ENCODE measurements at regions of chr3 and their contacts with region 1.

Region 1: DNA sequence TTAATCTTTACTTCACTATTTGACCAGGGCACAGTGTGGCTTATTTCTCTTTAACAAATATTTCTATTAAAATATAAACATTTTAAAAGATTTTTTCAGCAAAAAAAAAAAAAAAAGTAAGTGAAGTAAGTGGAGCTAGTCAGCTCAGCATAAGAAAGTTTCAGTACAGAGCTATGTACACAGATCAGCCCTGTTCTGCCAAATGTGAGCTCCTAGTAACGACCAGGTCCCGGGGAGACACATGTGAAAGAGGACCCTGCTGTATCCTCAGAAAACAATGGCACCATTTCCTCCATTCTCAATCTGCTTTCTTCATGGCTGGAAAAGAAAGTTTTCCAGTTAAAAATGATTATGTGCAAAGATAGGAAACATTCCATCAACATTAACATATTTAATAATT is 13.4 kb downstream of the CSTA start:
- DNase-seq: no peak
- ATAC-seq: no peak
- H3K4me3 ChIP-seq: no peak overlapping the region
- H3K27ac ChIP-seq: no peak overlapping the region
- H3K4me1 ChIP-seq: no peaks in the 10 kb centered on the region
- H3K27me3 ChIP-seq: no peaks in the 10 kb centered on the region
- CTCF ChIP-seq: no peak
- EP300 ChIP-seq: no peak
- POLR2A ChIP-seq: no peak
- RAD21 ChIP-seq: no peak

Region 2: GRCh38 chr3:122350814-122351418 is 12.5 kb after region 1 on chr3:
- CTCF ChIA-PET with region 1: interaction called, 10 read pairs
- POLR2A ChIA-PET with region 1: no interaction called
- RAD21 ChIA-PET with region 1: no interaction called
- SMC1A ChIA-PET with region 1: interaction called, 11 read pairs
- in situ Hi-C with region 1: no loop called
- intact Hi-C with region 1: no loop called
- DNase-seq: no peak
- ATAC-seq: no peak
- H3K4me3 ChIP-seq: no peak overlapping the region
- H3K27ac ChIP-seq: no peak overlapping the region
- H3K4me1 ChIP-seq: no peaks in the 10 kb centered on the region
- H3K27me3 ChIP-seq: no peaks in the 10 kb centered on the region
- CTCF ChIP-seq: no peak
- EP300 ChIP-seq: no peak
- POLR2A ChIP-seq: no peak
- RAD21 ChIP-seq: no peak

Region 3: GRCh38 chr3:122697952-122698620 is 359.7 kb after region 1 on chr3:
- CTCF ChIA-PET with region 1: no interaction called
- POLR2A ChIA-PET with region 1: no interaction called
- RAD21 ChIA-PET with region 1: no interaction called
- SMC1A ChIA-PET with region 1: no interaction called
- in situ Hi-C with region 1: no loop called
- intact Hi-C with region 1: no loop called
- DNase-seq: peak; percentile 61
- ATAC-seq: peak; percentile 96
- H3K4me3 ChIP-seq: peak overlapping the region; percentile 7; the same call in 1 of the 2 replicates
- H3K27ac ChIP-seq: peak overlapping the region; percentile 65
- H3K4me1 ChIP-seq: peaks cover 25% of the 10 kb centered on the region
- H3K27me3 ChIP-seq: no peaks in the 10 kb centered on the region
- CTCF ChIP-seq: no peak
- EP300 ChIP-seq: no peak
- POLR2A ChIP-seq: no peak
- RAD21 ChIP-seq: no peak